ENCODE measurements at regions of chr5 and their contacts with region 1.

Region 1: GRCh38 chr5:54229041-54229780 is 81.2 kb downstream of the ARL15 start:
- DNase-seq: peak; percentile 49 to 77 (median 63)
- ATAC-seq: peak; percentile 85
- H3K4me3 ChIP-seq: no peak overlapping the region
- H3K4me3 Mint-ChIP-seq: no peak overlapping the region
- H3K27ac ChIP-seq: no peak overlapping the region
- H3K27ac Mint-ChIP-seq: no peak overlapping the region
- H3K4me1 ChIP-seq: no peaks in the 10 kb centered on the region
- H3K4me1 Mint-ChIP-seq: peaks cover 9% of the 10 kb centered on the region
- H3K27me3 ChIP-seq: no peaks in the 10 kb centered on the region
- H3K27me3 Mint-ChIP-seq: no peaks in the 10 kb centered on the region
- CTCF ChIP-seq: peak; percentile 97

Region 2: GRCh38 chr5:52743970-52744369 is 1485.2 kb before region 1 on chr5:
- CTCF ChIA-PET with region 1: no interaction called
- POLR2A ChIA-PET with region 1: no interaction called
- intact Hi-C with region 1: no loop called
- DNase-seq: peak in 9 of 14 experiments; percentile 7 to 70 (median 37)
- ATAC-seq: peak; percentile 86
- H3K4me3 ChIP-seq: no peak overlapping the region
- H3K4me3 Mint-ChIP-seq: peak overlapping the region; percentile 1
- H3K27ac ChIP-seq: peak overlapping the region; percentile 14 to 42
- H3K27ac Mint-ChIP-seq: peak overlapping the region; percentile 66
- H3K4me1 ChIP-seq: peaks cover 29% of the 10 kb centered on the region
- H3K4me1 Mint-ChIP-seq: peaks cover 38% of the 10 kb centered on the region
- H3K27me3 ChIP-seq: no peaks in the 10 kb centered on the region
- H3K27me3 Mint-ChIP-seq: no peaks in the 10 kb centered on the region
- CTCF ChIP-seq: no peak

Region 3: GRCh38 chr5:53123702-53124101 is 1105.5 kb before region 1 on chr5:
- CTCF ChIA-PET with region 1: no interaction called
- POLR2A ChIA-PET with region 1: no interaction called
- intact Hi-C with region 1: loop called in 1 of 2 experiments (anchors 10 kb)
- DNase-seq: no peak
- ATAC-seq: no peak
- H3K4me3 ChIP-seq: no peak overlapping the region
- H3K4me3 Mint-ChIP-seq: no peak overlapping the region
- H3K27ac ChIP-seq: no peak overlapping the region
- H3K27ac Mint-ChIP-seq: no peak overlapping the region
- H3K4me1 ChIP-seq: no peaks in the 10 kb centered on the region
- H3K4me1 Mint-ChIP-seq: no peaks in the 10 kb centered on the region
- H3K27me3 ChIP-seq: no peaks in the 10 kb centered on the region
- H3K27me3 Mint-ChIP-seq: peaks cover 5% of the 10 kb centered on the region
- CTCF ChIP-seq: no peak

Region 4: DNA sequence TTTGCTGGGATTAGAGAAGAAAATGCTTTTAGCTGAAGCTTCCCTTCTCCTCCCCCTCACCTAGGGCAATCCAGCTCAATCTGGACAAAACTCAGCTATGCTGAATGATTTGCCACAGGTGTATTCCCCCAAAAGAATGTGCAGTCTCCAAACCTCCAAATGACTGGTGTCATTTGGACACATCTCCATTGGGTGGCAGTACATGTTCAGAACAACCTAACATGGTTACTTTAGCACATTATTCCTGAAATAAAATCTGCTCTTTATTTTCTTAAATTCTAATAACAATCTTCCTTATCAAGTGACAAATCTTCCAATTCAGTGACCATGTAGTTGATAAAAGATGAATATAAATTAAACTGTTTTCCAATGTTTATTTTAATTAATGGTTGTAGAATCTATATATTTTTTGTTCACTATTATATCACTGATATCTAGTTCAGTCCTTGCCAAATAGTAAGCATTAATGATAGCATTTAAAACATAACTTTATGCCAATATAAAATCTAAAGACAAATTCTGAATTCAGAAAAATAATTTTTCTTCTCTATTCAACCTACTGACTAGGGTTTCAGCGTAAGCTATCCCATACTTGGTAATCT is 1058.4 kb before region 1 on chr5:
- CTCF ChIA-PET with region 1: no interaction called
- POLR2A ChIA-PET with region 1: no interaction called
- intact Hi-C with region 1: loop called (anchors 2 to 5 kb)
- DNase-seq: peak in 3 of 14 experiments; percentile 15 to 20 (median 18)
- ATAC-seq: no peak
- H3K4me3 ChIP-seq: no peak overlapping the region
- H3K4me3 Mint-ChIP-seq: no peak overlapping the region
- H3K27ac ChIP-seq: no peak overlapping the region
- H3K27ac Mint-ChIP-seq: no peak overlapping the region
- H3K4me1 ChIP-seq: no peaks in the 10 kb centered on the region
- H3K4me1 Mint-ChIP-seq: no peaks in the 10 kb centered on the region
- H3K27me3 ChIP-seq: peaks cover 0 to 4% of the 10 kb centered on the region in 2 experiments
- H3K27me3 Mint-ChIP-seq: peaks cover 43% of the 10 kb centered on the region
- CTCF ChIP-seq: peak; percentile 49

Region 5: GRCh38 chr5:53481887-53482716 is 747.1 kb before region 1 on chr5:
- CTCF ChIA-PET with region 1: no interaction called
- POLR2A ChIA-PET with region 1: no interaction called
- intact Hi-C with region 1: loop called (anchors 5 kb)
- DNase-seq: peak in 12 of 14 experiments; percentile 17 to 72 (median 40)
- ATAC-seq: peak; percentile 70
- H3K4me3 ChIP-seq: peak overlapping the region; percentile 56
- H3K4me3 Mint-ChIP-seq: peak overlapping the region; percentile 93
- H3K27ac ChIP-seq: no peak overlapping the region
- H3K27ac Mint-ChIP-seq: peak overlapping the region; percentile 53
- H3K4me1 ChIP-seq: peaks cover 40% of the 10 kb centered on the region
- H3K4me1 Mint-ChIP-seq: peaks cover 46% of the 10 kb centered on the region
- H3K27me3 ChIP-seq: peaks cover 30 to 40% of the 10 kb centered on the region in 2 experiments
- H3K27me3 Mint-ChIP-seq: peaks cover 67% of the 10 kb centered on the region
- CTCF ChIP-seq: no peak

Region 6: GRCh38 chr5:54302267-54302687 is 73.1 kb after region 1 on chr5:
- CTCF ChIA-PET with region 1: no interaction called
- POLR2A ChIA-PET with region 1: no interaction called
- intact Hi-C with region 1: no loop called
- DNase-seq: peak in 2 of 14 experiments; percentile 49 to 52
- ATAC-seq: no peak
- H3K4me3 ChIP-seq: no peak overlapping the region
- H3K4me3 Mint-ChIP-seq: no peak overlapping the region
- H3K27ac ChIP-seq: no peak overlapping the region
- H3K27ac Mint-ChIP-seq: no peak overlapping the region
- H3K4me1 ChIP-seq: peaks cover 11% of the 10 kb centered on the region
- H3K4me1 Mint-ChIP-seq: peaks cover 49% of the 10 kb centered on the region
- H3K27me3 ChIP-seq: no peaks in the 10 kb centered on the region
- H3K27me3 Mint-ChIP-seq: no peaks in the 10 kb centered on the region
- CTCF ChIP-seq: no peak

Region 7: GRCh38 chr5:54370982-54371381 is 141.8 kb after region 1 on chr5:
- CTCF ChIA-PET with region 1: no interaction called
- POLR2A ChIA-PET with region 1: no interaction called
- intact Hi-C with region 1: no loop called
- DNase-seq: no peak
- ATAC-seq: no peak
- H3K4me3 ChIP-seq: no peak overlapping the region
- H3K4me3 Mint-ChIP-seq: no peak overlapping the region
- H3K27ac ChIP-seq: no peak overlapping the region
- H3K27ac Mint-ChIP-seq: no peak overlapping the region
- H3K4me1 ChIP-seq: no peaks in the 10 kb centered on the region
- H3K4me1 Mint-ChIP-seq: no peaks in the 10 kb centered on the region
- H3K27me3 ChIP-seq: peaks cover 1 to 12% of the 10 kb centered on the region in 2 experiments
- H3K27me3 Mint-ChIP-seq: peaks cover 25% of the 10 kb centered on the region
- CTCF ChIP-seq: no peak

Measured in CD4-positive, alpha-beta T cell (primary cell).